ENCODE measurements at regions of chr6 and their contacts with region 1.

Region 1: DNA sequence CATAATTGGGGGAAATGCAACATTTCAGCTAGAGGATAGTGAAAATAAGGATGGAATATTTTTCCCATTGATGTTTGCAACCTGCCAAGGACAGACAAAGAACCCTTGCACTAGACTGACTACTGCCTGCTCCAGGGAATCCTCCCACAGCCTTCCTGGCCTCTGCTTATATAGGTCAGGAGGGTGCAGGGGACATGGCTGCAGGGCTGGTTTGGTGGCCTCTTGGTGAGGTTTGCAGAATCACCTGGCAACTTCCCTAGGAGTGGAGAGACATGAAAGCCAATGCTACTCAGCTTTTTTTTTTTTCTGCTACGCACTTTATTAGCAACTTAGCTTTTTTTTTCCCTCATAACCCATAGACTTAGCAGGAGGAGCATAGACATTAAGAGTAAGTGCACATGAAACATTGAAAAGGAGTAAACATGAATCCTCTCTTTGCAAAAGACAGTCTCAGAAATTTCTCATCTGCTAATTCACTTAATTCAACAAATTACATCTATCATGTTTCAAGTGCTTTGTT is 39.8 kb upstream of the CDYL start:
- DNase-seq: no peak
- ATAC-seq: no peak

Region 2: DNA sequence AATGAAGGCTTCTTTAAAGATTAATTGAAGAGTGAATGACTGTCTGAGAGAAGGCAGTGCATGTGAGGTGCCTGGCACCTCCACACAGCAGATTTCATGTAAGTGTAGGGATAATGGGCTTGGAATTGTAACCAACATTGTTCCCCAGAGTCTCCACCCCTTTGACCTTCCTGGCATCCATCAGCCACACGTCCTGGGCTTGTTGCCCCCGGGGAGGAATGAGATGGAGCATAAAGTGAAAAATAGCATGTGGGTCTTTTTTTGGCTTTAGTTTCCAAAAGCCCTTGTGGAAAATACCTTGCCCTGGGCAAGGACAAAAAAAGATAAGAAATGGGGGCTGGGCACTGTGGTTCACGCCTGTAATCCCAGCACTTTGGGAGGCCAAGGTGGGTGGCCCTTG is 358.8 kb before region 1 on chr6:
- intact Hi-C with region 1: loop called (anchors 5 kb)
- DNase-seq: no peak
- ATAC-seq: peak; percentile 61

Region 3: DNA sequence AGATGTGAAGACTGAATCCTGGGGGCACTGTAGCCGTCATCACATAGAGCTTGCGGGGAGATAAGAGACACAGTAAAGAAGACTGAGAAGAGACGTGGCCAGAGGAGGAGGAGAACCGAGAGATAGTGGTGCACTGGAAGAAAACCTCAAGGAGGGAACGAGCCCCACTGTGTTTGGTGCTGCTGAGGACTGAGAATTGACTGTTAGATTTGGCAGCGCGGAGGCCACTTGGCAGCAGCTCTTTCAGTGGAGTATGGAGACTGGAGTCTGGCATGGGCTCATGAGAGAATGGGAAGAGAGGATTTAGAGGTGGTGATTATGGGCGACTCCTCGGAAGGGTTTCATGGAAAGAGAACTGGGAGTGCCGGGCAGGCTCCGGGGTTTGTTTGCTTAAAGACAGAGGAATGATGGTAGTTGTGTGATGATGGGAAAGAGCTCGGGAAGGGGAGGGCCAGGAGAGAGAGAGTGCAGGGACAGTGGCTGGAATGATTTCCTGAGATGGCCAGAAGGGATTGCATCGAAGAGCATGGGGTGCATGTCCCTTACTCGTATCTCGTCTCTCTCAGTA is 57.8 kb after region 1 on chr6:
- intact Hi-C with region 1: no loop called
- DNase-seq: peak; percentile 76
- ATAC-seq: peak; percentile 96

Region 4: DNA sequence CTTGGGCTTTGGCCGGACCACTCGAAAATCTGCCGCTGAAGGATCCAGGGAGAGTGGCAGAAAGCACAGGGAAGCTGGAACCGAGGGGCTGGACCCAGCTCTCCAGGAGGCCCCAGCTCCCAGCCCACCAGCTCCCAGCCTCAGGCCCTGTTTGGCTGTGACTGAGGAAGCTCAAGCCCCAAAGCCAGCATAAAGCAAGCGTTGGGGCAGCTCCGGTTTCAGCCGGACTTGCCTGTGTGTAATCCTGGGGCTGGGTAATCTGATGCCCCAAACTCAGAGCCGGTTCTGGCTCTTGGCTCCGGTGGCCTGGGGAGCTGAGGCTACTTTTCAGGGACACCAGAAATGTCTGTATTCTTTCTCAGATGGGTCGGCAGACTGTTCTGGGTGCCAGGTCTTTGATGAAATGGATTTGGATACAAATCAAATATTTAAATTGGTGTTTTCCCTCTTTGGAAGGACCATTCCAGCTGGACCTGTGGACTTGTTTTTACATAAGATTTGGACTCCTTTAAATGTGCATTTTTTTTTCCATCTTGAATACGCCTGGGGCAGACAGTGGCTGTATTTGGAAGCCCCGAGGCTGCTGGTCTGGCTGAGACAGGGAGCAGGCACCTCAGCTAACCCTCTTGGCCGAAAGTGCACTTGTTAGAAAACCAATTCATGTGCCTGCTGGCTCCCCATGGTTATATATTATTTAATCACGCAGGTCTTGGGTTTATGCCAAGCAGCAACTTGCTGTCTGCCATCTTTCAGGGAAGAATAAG is 237.7 kb after region 1 on chr6:
- intact Hi-C with region 1: no loop called
- DNase-seq: peak; percentile 40
- ATAC-seq: peak; percentile 64

Measured in left ventricle myocardium superior (tissue), 1 donor.